Activated T-helper 1 cell treated with anti-CD3 and anti-CD28 coated beads, Interleukin-12 subunit alpha, Interleukin-12 subunit beta, Interleukin-2, Interleukin-4 antibody, amounts not matched to agents 30 ng/mL and 10 ng/mL and 1 ng/mL, durations not matched to agents 14 hours and 24 hours and 36 hours (primary cell): ENCODE measurements at regions of chr12 and their contacts with region 1.

Region 1: DNA sequence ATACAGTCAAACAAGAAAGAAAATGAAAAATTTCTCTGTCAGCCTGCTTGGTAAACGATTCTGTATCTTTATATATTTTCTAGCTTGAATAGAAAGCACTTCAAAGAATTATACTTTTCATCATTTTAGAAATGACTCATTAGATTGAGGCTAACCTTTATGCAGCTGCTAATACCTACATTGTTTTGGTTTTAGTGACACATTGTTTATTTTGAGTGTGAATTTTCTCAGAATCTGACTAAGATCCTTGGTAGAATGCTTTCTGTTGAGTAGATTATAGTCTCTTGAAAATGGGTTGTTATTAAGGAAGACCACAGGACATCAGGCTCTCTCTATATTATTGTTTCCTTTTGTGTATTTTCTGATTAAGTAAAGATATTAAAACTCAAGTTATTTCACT is at the start of gene PMCH:
- DNase-seq: no peak
- H3K4me3 Mint-ChIP-seq: peak within 1 kb of the TSS; percentile 2
- H3K27ac Mint-ChIP-seq: peak within 1 kb of the TSS; percentile 75
- H3K4me1 Mint-ChIP-seq: peaks cover 20% of the 10 kb centered on the region
- H3K27me3 Mint-ChIP-seq: no peaks in the 10 kb centered on the region
- total RNA-seq, gene PMCH: 3.1 and 4.3 TPM in 2 replicates

Region 2: DNA sequence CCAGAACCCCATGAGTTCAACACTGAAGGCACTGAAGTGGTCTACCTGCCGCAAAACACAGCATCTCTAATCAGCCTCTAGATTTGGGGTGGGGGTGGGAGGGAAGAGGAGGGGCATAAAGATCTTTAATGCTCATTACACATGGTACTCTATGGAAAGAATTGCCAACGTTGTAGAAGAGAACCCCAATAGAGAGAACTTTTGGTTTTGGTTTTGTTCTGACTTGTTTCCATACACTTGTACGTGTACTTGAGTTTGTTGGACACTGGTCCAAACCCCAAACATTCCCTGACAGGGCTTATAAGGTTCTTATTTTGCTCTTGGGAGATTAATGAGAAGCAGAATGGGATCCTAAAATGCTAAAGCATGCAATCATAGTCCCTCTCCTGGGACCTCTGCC is 398.0 kb before region 1 on chr12:
- intact Hi-C with region 1: loop called (anchors 5 kb)
- DNase-seq: no peak
- H3K4me3 Mint-ChIP-seq: peak overlapping the region; percentile 1
- H3K27ac Mint-ChIP-seq: peak overlapping the region; percentile 55
- H3K4me1 Mint-ChIP-seq: peaks cover 54% of the 10 kb centered on the region
- H3K27me3 Mint-ChIP-seq: no peaks in the 10 kb centered on the region

Region 3: GRCh38 chr12:102169922-102170621 is 27.7 kb before region 1 on chr12:
- intact Hi-C with region 1: loop called (anchors 1 kb)
- DNase-seq: no peak
- H3K4me3 Mint-ChIP-seq: no peak overlapping the region
- H3K27ac Mint-ChIP-seq: no peak overlapping the region
- H3K4me1 Mint-ChIP-seq: peaks cover 29% of the 10 kb centered on the region
- H3K27me3 Mint-ChIP-seq: no peaks in the 10 kb centered on the region

Region 4: DNA sequence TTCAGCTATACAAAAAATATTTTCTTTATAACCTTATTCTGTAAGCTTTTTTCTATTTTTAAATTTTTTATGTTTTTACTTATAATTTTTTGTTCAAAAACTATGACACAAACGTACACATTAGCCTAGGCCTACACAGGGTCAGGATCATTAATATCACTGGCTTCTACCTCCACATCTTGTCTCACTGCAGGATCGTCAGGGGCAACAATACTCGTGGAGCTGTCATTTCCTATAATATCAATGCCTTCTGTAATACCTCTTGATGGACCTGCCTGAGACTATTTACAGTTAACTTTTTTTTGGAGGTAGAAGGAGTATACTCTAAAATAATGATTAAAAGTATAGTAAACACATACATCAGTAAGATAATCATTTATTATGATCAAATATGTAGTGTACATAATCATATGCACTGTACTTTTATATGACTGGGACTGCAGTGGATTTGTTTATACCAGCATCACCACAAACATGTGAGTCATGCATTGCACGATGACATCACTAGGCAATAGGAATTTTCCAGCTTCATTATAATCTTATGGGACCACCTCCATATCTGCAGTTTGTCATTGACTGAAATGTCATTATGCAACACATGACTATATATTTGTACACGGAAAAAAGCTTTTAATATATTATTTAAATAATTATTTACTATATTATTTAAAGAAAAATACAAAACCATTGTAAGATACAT is 18.4 kb after region 1 on chr12:
- intact Hi-C with region 1: loop called (anchors 2 kb)
- DNase-seq: no peak
- H3K4me3 Mint-ChIP-seq: no peak overlapping the region
- H3K27ac Mint-ChIP-seq: no peak overlapping the region
- H3K4me1 Mint-ChIP-seq: no peaks in the 10 kb centered on the region
- H3K27me3 Mint-ChIP-seq: no peaks in the 10 kb centered on the region

Region 5: GRCh38 chr12:102421801-102422583 is 224.2 kb after region 1 on chr12:
- intact Hi-C with region 1: loop called (anchors 1 kb)
- DNase-seq: no peak
- H3K4me3 Mint-ChIP-seq: no peak overlapping the region
- H3K27ac Mint-ChIP-seq: peak overlapping the region; percentile 78
- H3K4me1 Mint-ChIP-seq: peaks cover 15% of the 10 kb centered on the region
- H3K27me3 Mint-ChIP-seq: peaks cover 6% of the 10 kb centered on the region

Region 6: GRCh38 chr12:102728506-102729242 is 530.9 kb after region 1 on chr12:
- intact Hi-C with region 1: loop called (anchors 1 kb)
- DNase-seq: no peak
- H3K4me3 Mint-ChIP-seq: no peak overlapping the region
- H3K27ac Mint-ChIP-seq: peak overlapping the region; percentile 24
- H3K4me1 Mint-ChIP-seq: peaks cover 11% of the 10 kb centered on the region
- H3K27me3 Mint-ChIP-seq: no peaks in the 10 kb centered on the region